ENCODE measurements at regions of chr5 and their contacts with region 1.

Region 1: DNA sequence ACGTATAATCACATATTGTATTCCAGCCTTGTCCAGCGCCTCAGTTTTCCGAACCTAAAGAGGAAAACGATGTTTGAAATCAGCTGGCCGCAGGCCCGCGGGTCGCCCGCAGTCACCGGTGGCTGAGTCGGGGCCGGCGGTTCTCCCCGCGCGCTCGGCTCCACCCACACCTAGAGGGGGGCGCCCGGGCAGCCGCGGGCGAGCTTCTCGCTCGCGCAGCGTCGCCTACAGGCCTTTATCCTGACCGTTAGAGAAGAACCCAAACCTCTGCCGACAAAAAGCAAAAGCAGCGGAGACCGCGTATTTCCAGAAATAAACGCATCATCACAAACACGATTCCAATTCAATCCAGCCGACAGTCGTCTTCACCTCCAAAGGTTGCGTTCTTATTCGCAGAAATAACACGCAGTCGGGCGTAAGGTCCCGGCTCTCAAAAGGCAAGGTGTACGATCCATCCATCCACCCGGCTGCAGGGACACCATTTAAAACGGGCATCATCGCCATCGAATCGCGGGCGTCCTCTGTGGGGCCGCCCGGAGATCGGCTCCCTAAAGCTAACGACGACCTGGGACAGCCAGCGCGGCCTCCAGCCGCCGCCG is 680 bp upstream of the NIPBL start:
- DNase-seq: peak; percentile 59 to 97 (median 78)

Region 2: GRCh38 chr5:36151434-36152323 is 724.2 kb before region 1 on chr5 and contains the starts of genes LMBRD2 and SKP2:
- intact Hi-C with region 1: loop called (anchors 5 kb)
- DNase-seq: peak; percentile 98 to 100 (median 99)

Region 3: GRCh38 chr5:36241631-36242533 is 634.0 kb before region 1 on chr5 and contains the start of gene NADK2:
- intact Hi-C with region 1: loop called (anchors 5 kb)
- DNase-seq: peak; percentile 92 to 99 (median 96)

Region 4: GRCh38 chr5:36744773-36745589 is 130.9 kb before region 1 on chr5:
- intact Hi-C with region 1: loop called (anchors 2 kb)
- DNase-seq: peak in 9 of 10 donors; percentile 30 to 91 (median 62)

Region 5: GRCh38 chr5:36944607-36945225 is 68.8 kb after region 1 on chr5:
- intact Hi-C with region 1: loop called (anchors 1 kb)
- DNase-seq: no peak

Region 6: GRCh38 chr5:37005946-37006540 is 130.2 kb after region 1 on chr5:
- intact Hi-C with region 1: loop called (anchors 5 kb)
- DNase-seq: no peak

Region 7: DNA sequence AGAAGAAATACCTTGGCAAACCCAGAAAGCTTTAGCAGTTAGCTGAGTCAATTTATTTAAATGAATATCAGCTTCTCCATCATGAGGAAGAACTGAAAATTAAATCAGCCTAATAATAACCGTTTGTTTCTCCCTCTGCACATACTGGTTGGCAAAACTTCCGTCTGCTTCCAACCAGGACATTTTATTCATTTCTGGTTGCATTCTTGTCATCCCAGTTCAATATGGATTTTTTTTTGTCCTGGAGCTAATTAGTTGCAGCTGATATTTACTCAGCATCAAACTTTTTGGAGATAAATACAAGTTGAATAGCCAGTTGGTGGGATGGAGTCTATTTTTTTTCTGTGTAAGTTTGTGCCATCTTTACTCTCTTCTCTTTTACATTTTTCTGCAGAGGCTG is 1090.4 kb after region 1 on chr5:
- intact Hi-C with region 1: no loop called
- DNase-seq: no peak

Measured in posterior cingulate gyrus (tissue), 11 donors.